B cell (primary cell): ENCODE measurements at regions of chr19 and their contacts with region 1.

Region 1: GRCh38 chr19:19404879-19405860 is at the start of gene GATAD2A:
- DNase-seq: peak; percentile 96
- ATAC-seq: peak; percentile 88
- H3K4me3 ChIP-seq: peak within 1 kb of the TSS; percentile 55 to 86 (median 70)
- H3K4me3 Mint-ChIP-seq: peak within 1 kb of the TSS; percentile 91
- H3K27ac ChIP-seq: peak within 1 kb of the TSS; percentile 55 to 77
- H3K27ac Mint-ChIP-seq: peak within 1 kb of the TSS; percentile 92
- H3K4me1 ChIP-seq: peaks cover 32 to 37% of the 10 kb centered on the region in 2 donors
- H3K4me1 Mint-ChIP-seq: peaks cover 39% of the 10 kb centered on the region
- H3K27me3 ChIP-seq: no peaks in the 10 kb centered on the region
- H3K27me3 Mint-ChIP-seq: no peaks in the 10 kb centered on the region
- CTCF ChIP-seq: peak; percentile 38
- total RNA-seq, gene GATAD2A: 76.3 and 97.3 TPM in 2 replicates

Region 2: DNA sequence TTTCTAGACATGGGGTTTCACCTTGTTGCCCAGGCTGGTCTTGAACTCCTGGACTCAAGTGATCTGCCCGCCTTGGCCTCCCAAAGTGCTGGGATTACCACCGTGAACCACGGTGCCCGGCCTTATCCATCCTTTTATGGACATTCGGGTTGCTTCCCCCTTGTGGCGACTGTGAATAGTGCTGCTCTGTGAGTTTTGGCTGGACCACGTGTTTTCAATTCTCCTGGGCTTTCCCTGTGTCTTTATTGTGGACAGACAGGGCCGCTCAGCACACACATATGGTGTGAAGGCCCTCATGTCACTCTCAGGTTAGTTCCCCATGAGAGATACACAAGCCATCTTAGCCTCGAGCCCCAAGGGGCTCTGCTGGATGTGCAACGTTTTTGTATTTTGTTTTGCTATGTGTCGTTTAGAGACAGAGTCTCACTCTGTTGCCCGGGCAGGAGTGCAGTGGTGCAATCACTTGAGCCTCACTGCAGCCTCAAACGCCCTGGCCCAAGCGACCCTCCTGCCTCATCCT is 44.0 kb before region 1 on chr19:
- CTCF ChIA-PET with region 1: interaction called, 19 read pairs
- POLR2A ChIA-PET with region 1: interaction called, 8 read pairs
- intact Hi-C with region 1: loop called (anchors 1 kb)
- DNase-seq: peak; percentile 83
- ATAC-seq: peak; percentile 68
- H3K4me3 ChIP-seq: peak overlapping the region in 4 of 5 experiments; percentile 28 to 59 (median 42)
- H3K4me3 Mint-ChIP-seq: peak overlapping the region; percentile 79
- H3K27ac ChIP-seq: peak overlapping the region; percentile 22 to 40
- H3K27ac Mint-ChIP-seq: peak overlapping the region; percentile 88
- H3K4me1 ChIP-seq: peaks cover 18 to 26% of the 10 kb centered on the region in 2 donors
- H3K4me1 Mint-ChIP-seq: peaks cover 22% of the 10 kb centered on the region
- H3K27me3 ChIP-seq: no peaks in the 10 kb centered on the region
- H3K27me3 Mint-ChIP-seq: no peaks in the 10 kb centered on the region
- CTCF ChIP-seq: peak; percentile 84

Region 3: GRCh38 chr19:19385108-19385899 is 19.9 kb before region 1 on chr19:
- CTCF ChIA-PET with region 1: interaction called, 12 read pairs
- POLR2A ChIA-PET with region 1: interaction called, 45 read pairs
- intact Hi-C with region 1: loop called (anchors 1 kb)
- DNase-seq: peak; percentile 99
- ATAC-seq: peak; percentile 89
- H3K4me3 ChIP-seq: peak overlapping the region; percentile 21 to 88 (median 80)
- H3K4me3 Mint-ChIP-seq: peak overlapping the region; percentile 92
- H3K27ac ChIP-seq: peak overlapping the region; percentile 57 to 81
- H3K27ac Mint-ChIP-seq: peak overlapping the region; percentile 92
- H3K4me1 ChIP-seq: peaks cover 15 to 24% of the 10 kb centered on the region in 2 donors
- H3K4me1 Mint-ChIP-seq: peaks cover 46% of the 10 kb centered on the region
- H3K27me3 ChIP-seq: no peaks in the 10 kb centered on the region
- H3K27me3 Mint-ChIP-seq: no peaks in the 10 kb centered on the region
- CTCF ChIP-seq: no peak

Region 4: GRCh38 chr19:19425170-19425875 is 20.2 kb after region 1 on chr19:
- CTCF ChIA-PET with region 1: no interaction called
- POLR2A ChIA-PET with region 1: no interaction called
- intact Hi-C with region 1: no loop called
- DNase-seq: no peak
- ATAC-seq: no peak
- H3K4me3 ChIP-seq: no peak overlapping the region
- H3K4me3 Mint-ChIP-seq: no peak overlapping the region
- H3K27ac ChIP-seq: no peak overlapping the region
- H3K27ac Mint-ChIP-seq: no peak overlapping the region
- H3K4me1 ChIP-seq: peaks cover 36 to 40% of the 10 kb centered on the region in 2 donors
- H3K4me1 Mint-ChIP-seq: peaks cover 81% of the 10 kb centered on the region
- H3K27me3 ChIP-seq: no peaks in the 10 kb centered on the region
- H3K27me3 Mint-ChIP-seq: no peaks in the 10 kb centered on the region
- CTCF ChIP-seq: no peak

Region 5: DNA sequence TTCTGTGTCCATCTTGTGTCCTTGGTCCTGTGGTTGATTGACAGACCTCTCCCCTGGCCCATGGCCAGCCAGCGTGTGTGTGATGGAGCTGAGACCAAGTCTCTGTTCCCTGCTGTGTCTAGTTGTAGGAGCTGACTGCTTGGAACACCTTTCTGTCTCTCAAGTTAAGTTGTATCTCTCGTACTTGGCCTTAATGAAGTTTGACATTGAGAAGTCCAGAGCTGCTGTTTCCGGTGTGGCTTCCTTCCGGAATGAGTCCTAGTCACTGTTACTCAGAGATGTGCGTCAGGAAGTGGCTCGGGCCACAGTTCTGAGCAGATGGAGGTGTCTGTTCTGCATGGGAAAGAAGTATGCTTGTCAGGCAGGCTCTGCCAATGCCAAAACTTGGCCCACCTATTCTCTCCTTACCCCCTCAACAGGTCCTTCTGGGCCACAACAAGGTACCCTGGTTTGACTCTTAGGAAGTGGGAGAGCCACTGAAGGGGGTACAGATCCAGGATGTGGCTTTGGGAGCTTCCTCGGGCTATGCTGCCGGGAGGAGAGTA is 54.6 kb after region 1 on chr19:
- CTCF ChIA-PET with region 1: interaction called, 3 read pairs
- POLR2A ChIA-PET with region 1: interaction called, 5 read pairs
- intact Hi-C with region 1: loop called (anchors 5 kb)
- DNase-seq: peak; percentile 61
- ATAC-seq: peak; percentile 60
- H3K4me3 ChIP-seq: peak overlapping the region; percentile 11 to 47 (median 39)
- H3K4me3 Mint-ChIP-seq: peak overlapping the region; percentile 80
- H3K27ac ChIP-seq: peak overlapping the region; percentile 74 to 81
- H3K27ac Mint-ChIP-seq: peak overlapping the region; percentile 91
- H3K4me1 ChIP-seq: peaks cover 55 to 68% of the 10 kb centered on the region in 2 donors
- H3K4me1 Mint-ChIP-seq: peaks cover 71% of the 10 kb centered on the region
- H3K27me3 ChIP-seq: no peaks in the 10 kb centered on the region
- H3K27me3 Mint-ChIP-seq: no peaks in the 10 kb centered on the region
- CTCF ChIP-seq: no peak

Region 6: GRCh38 chr19:19732579-19733501 is 327.7 kb after region 1 on chr19 and contains the start of gene ZNF14:
- CTCF ChIA-PET with region 1: no interaction called
- POLR2A ChIA-PET with region 1: no interaction called
- intact Hi-C with region 1: no loop called
- DNase-seq: peak; percentile 94
- ATAC-seq: peak; percentile 100
- H3K4me3 ChIP-seq: peak within 1 kb of the TSS; percentile 59 to 95 (median 94)
- H3K4me3 Mint-ChIP-seq: peak within 1 kb of the TSS; percentile 99
- H3K27ac ChIP-seq: peak within 1 kb of the TSS; percentile 49 to 76
- H3K27ac Mint-ChIP-seq: peak within 1 kb of the TSS; percentile 96
- H3K4me1 ChIP-seq: peaks cover 11 to 17% of the 10 kb centered on the region in 2 donors
- H3K4me1 Mint-ChIP-seq: peaks cover 27% of the 10 kb centered on the region
- H3K27me3 ChIP-seq: no peaks in the 10 kb centered on the region
- H3K27me3 Mint-ChIP-seq: no peaks in the 10 kb centered on the region
- CTCF ChIP-seq: no peak
- total RNA-seq, gene ZNF14: 21.0 and 22.5 TPM in 2 replicates